ENCODE measurements at regions of chr15 and their contacts with region 1.

Region 1: GRCh38 chr15:71294886-71295638 is 179.8 kb downstream of the THSD4 start:
- DNase-seq: peak; percentile 99
- H3K4me3 ChIP-seq: no peak overlapping the region
- H3K27ac ChIP-seq: peak overlapping the region; percentile 97
- H3K4me1 ChIP-seq: peaks cover 35% of the 10 kb centered on the region
- H3K27me3 ChIP-seq: no peaks in the 10 kb centered on the region
- CTCF ChIP-seq: no peak
- POLR2A ChIP-seq: peak; percentile 81

Region 2: DNA sequence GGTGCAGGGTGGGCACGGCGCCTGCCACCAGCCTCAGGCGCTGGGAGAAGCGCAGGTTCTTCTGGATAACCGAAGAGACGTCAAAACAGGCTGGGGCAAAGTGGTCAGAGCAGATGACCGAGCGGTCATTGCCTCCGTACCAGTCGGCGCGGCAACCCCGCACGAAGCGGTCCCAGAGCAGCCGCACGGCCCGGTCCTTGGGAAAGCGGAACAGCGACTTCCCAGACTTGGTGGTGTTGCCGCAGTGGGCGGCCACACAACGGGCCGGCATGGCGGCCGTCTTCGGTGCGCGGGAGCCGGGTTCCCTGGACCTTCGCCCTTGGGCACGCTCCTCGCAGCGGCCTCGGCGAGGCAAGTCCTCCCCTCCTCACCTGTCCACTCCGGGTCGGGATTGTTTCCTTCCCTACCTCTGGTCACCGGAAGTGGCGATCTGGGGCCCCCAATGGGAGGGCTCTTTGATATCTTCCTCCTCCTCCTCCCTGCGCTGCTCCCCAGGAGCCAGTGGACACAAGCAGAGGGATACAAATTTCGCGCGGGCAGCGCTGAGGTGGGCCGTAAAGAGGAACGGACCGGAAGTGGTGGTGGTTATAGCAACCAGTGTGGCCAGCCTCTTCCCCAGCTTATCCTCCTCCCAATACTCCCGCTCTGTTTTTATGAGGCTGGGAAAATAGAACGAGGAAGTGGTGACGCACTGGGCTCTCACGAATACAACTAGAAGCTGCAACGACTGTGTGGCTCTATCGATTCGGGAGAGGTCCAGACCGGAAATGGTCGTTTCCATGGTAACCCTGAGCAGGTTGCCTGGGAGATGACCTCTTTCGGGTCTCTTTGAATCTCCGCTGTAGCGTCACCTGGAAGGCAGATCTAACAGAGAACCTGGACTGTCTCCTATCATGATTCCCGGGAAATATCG is 402.8 kb before region 1 on chr15 and contains the starts of genes LRRC49 and THAP10:
- CTCF ChIA-PET with region 1: no interaction called
- POLR2A ChIA-PET with region 1: no interaction called
- dilution Hi-C with region 1: no loop called
- intact Hi-C with region 1: loop called (anchors 1 kb)
- DNase-seq: peak; percentile 98
- H3K4me3 ChIP-seq: peak within 1 kb of the TSS; percentile 47 to 81 (median 69)
- H3K27ac ChIP-seq: peak within 1 kb of the TSS; percentile 86
- H3K4me1 ChIP-seq: peaks cover 17% of the 10 kb centered on the region
- H3K27me3 ChIP-seq: no peaks in the 10 kb centered on the region
- CTCF ChIP-seq: no peak
- POLR2A ChIP-seq: no peak
- total RNA-seq, gene LRRC49: 6.6 and 7.4 TPM in 2 replicates
- total RNA-seq, gene THAP10: 2.7 and 4.0 TPM in 2 replicates

Region 3: DNA sequence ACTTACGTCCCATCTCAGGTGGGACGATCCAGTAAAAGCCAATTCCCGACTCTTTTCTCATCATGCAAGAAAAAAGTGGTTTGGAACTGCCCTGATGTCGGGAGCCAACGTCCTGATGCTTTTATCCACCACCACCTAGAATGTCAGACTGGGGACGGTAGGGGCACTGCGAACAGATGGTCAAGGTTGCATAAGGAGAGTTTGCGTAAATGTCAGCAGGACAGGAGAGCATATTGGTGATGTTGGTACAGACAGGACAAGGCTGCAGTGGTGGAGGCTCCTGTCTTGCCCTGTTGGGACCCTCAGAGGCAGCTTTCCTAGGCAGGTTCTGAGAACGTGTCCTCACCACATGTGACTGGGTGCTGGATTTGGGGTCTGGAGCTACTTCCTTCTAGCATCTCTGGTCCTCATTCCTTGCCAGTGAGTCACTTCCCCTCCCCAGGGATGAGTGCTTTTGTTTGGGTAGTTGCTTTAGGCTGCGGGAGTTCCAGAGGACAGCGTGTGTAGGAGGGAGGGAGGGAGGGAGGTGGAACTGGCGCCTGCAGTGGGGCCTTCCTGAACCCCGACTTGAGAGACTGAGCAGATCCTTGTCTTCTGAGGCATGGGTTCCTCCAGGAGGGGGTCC is 158.8 kb before region 1 on chr15:
- CTCF ChIA-PET with region 1: no interaction called
- POLR2A ChIA-PET with region 1: no interaction called
- dilution Hi-C with region 1: no loop called
- intact Hi-C with region 1: loop called (anchors 1 kb)
- DNase-seq: peak; percentile 56
- H3K4me3 ChIP-seq: no peak overlapping the region
- H3K27ac ChIP-seq: peak overlapping the region; percentile 81
- H3K4me1 ChIP-seq: peaks cover 48% of the 10 kb centered on the region
- H3K27me3 ChIP-seq: no peaks in the 10 kb centered on the region
- CTCF ChIP-seq: no peak
- POLR2A ChIP-seq: no peak

Region 4: DNA sequence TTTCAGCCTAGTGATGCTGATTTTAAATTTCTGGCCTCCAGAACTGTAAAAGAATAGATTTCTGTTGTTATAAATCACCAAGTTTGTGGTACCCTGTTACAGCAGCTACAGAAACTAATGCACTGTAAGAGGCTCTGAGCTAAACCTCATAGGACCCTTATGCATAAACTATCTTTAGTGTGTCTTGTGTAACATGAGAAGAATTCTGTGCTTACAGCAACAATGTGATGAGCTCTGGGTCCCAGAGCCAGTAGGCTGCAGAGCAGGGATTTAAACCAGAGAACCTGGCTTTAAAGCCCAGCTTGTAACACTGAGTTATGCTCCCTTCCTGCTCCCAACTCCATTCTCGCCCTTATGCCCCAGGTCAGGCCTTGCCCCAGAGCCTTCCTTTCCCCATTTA is 66.7 kb before region 1 on chr15:
- CTCF ChIA-PET with region 1: no interaction called
- POLR2A ChIA-PET with region 1: no interaction called
- dilution Hi-C with region 1: no loop called
- intact Hi-C with region 1: no loop called
- DNase-seq: no peak
- H3K4me3 ChIP-seq: no peak overlapping the region
- H3K27ac ChIP-seq: no peak overlapping the region
- H3K4me1 ChIP-seq: no peaks in the 10 kb centered on the region
- H3K27me3 ChIP-seq: no peaks in the 10 kb centered on the region
- CTCF ChIP-seq: no peak
- POLR2A ChIP-seq: no peak

Region 5: DNA sequence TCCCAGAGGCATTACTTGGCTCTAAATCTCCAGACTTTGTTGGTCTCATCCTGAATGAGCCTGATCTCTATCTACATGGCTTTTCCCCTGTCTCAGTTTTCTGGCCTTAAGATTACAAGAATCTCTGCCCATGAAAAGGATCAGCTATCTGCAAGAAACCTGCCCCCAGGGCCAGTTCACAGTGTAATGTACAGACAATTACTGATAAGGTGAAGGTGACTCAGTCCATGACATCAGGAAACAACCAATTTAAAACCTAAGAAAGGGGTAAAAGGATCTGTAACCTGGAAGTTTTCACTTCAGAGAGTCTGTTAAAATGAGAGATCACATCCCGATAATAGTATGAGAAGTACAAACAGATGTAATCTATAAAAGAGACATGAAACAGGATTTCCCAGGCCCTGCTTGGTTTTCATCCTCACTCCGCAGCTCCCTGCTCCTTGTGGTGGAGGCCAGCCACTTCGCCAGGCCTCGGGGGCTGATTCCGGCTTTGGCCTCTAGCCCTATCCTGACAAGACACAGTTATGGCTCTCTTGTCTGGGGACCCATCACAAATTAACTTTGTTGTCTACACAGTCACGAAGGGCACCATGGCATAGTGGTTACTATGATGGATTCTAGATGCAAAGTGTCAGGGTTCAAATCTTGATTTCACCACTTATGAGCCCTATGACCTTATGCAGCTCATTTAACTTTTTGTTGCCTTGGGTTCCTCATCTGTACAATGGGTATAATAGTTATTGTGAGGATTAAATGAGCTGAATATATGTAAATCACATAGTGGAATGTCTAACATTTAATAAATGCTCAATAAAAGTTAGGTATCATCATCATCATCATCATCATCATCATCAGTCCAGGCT is 42.8 kb before region 1 on chr15:
- CTCF ChIA-PET with region 1: interaction called, 3 read pairs
- POLR2A ChIA-PET with region 1: no interaction called
- dilution Hi-C with region 1: no loop called
- intact Hi-C with region 1: loop called (anchors 1 kb)
- DNase-seq: peak; percentile 58
- H3K4me3 ChIP-seq: no peak overlapping the region
- H3K27ac ChIP-seq: peak overlapping the region; percentile 60
- H3K4me1 ChIP-seq: peaks cover 31% of the 10 kb centered on the region
- H3K27me3 ChIP-seq: no peaks in the 10 kb centered on the region
- CTCF ChIP-seq: no peak
- POLR2A ChIP-seq: no peak

Region 6: GRCh38 chr15:71374607-71375352 is 79.7 kb after region 1 on chr15:
- CTCF ChIA-PET with region 1: interaction called, 3 read pairs
- POLR2A ChIA-PET with region 1: no interaction called
- dilution Hi-C with region 1: no loop called
- intact Hi-C with region 1: loop called (anchors 1 kb)
- DNase-seq: peak; percentile 79
- H3K4me3 ChIP-seq: no peak overlapping the region
- H3K27ac ChIP-seq: peak overlapping the region; percentile 84
- H3K4me1 ChIP-seq: peaks cover 30% of the 10 kb centered on the region
- H3K27me3 ChIP-seq: no peaks in the 10 kb centered on the region
- CTCF ChIP-seq: no peak
- POLR2A ChIP-seq: no peak

Region 7: GRCh38 chr15:72231066-72231846 is 936.2 kb after region 1 on chr15 and contains the start of gene PKM:
- CTCF ChIA-PET with region 1: no interaction called
- POLR2A ChIA-PET with region 1: no interaction called
- dilution Hi-C with region 1: no loop called
- intact Hi-C with region 1: loop called (anchors 10 kb)
- DNase-seq: peak; percentile 88
- H3K4me3 ChIP-seq: peak within 1 kb of the TSS; percentile 56 to 78 (median 70)
- H3K27ac ChIP-seq: peak within 1 kb of the TSS; percentile 84
- H3K4me1 ChIP-seq: peaks cover 40% of the 10 kb centered on the region
- H3K27me3 ChIP-seq: no peaks in the 10 kb centered on the region
- CTCF ChIP-seq: no peak
- POLR2A ChIP-seq: peak; percentile 99
- total RNA-seq, gene PKM: 932 and 968 TPM in 2 replicates

Measured in endothelial cell of umbilical vein (primary cell).